Transverse colon (tissue), 4 donors: ENCODE measurements at regions of chr4 and their contacts with region 1.

Region 1: GRCh38 chr4:161160718-161161117 is 1003.1 kb downstream of the FSTL5 start:
- DNase-seq: no peak
- H3K4me3 ChIP-seq: no peak overlapping the region
- H3K27ac ChIP-seq: no peak overlapping the region
- H3K4me1 ChIP-seq: no peaks in the 10 kb centered on the region
- H3K27me3 ChIP-seq: no peaks in the 10 kb centered on the region
- CTCF ChIP-seq: no peak
- EP300 ChIP-seq: no peak
- POLR2A ChIP-seq: no peak

Region 2: GRCh38 chr4:159366966-159367780 is 1793.5 kb before region 1 on chr4:
- in situ Hi-C with region 1: no loop called
- intact Hi-C with region 1: loop called (anchors 5 kb)
- DNase-seq: no peak
- H3K4me3 ChIP-seq: no peak overlapping the region
- H3K27ac ChIP-seq: no peak overlapping the region
- H3K4me1 ChIP-seq: no peaks in the 10 kb centered on the region
- H3K27me3 ChIP-seq: no peaks in the 10 kb centered on the region
- CTCF ChIP-seq: no peak
- EP300 ChIP-seq: no peak
- POLR2A ChIP-seq: no peak